ENCODE measurements at regions of chr3 and their contacts with region 1.

Region 1: GRCh38 chr3:171066206-171066605 is 39.7 kb upstream of the SLC2A2 start:
- DNase-seq: no peak
- CTCF ChIP-seq: no peak

Region 2: DNA sequence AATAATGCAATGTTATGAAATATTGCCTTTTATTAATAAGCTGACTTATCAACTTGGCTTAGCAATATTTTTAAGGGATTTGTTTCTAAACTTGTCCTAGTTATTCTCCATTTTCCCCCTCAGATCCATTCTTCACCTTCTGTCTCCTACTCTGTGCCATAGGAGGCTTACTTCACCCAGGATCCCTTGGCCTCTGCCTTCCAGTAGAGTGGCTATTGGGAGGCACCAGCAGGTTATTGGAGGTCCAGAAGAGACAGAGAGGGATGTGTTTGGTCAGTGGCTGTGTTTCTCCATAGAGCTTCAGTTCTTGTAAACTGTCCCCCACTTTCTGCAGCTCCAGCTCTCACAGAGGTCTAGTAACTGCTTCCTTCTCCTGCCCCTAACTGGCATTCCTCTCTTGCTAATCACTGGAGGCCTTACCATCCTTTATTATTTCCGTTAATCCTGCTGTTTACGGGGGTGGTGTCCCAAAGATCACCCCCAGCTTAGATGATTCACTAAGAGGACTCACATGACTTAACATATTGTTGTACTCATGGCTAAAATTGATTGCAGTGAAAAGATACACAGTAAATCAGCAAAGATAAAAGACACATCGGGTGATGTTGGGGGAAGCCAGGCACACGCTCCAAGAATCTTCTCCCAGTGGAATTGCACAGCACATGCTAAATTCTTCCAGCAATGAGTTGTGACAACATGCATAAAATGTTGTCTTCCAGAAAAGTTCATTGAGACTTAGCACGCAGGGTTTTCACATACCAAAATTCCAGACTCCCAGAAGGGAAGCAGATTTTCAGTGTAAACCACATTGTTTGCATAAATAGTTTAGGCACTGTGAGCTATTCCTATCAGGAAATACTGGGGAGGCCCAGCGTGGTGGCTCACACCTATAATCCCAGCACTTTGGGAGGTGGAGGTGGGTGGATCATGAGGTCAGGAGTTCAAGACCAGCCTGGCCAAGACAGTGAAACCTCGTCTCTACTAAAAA is 263.7 kb before region 1 on chr3:
- CTCF ChIA-PET with region 1: no interaction called
- POLR2A ChIA-PET with region 1: no interaction called
- DNase-seq: no peak
- CTCF ChIP-seq: no peak

Region 3: DNA sequence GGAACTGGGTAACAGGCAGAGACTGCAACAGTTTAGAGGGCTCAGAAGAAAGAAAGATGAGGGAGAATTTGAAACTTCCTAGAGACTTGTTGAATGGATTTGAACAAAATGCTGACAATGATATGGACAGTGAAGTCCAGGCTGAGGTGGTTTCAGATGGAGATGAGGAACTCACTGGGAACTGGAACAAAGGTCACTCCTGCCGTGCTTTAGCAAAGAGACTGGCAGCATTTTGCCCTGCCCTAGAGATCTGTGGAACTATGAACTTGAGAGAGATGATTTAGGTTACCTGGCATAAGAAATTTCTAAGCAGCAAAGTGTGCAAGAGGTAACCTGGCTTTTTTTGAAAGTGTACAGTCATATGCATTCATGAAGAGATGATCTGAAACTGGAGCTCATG is 169.4 kb before region 1 on chr3:
- CTCF ChIA-PET with region 1: no interaction called
- POLR2A ChIA-PET with region 1: no interaction called
- DNase-seq: no peak
- CTCF ChIP-seq: no peak

Region 4: DNA sequence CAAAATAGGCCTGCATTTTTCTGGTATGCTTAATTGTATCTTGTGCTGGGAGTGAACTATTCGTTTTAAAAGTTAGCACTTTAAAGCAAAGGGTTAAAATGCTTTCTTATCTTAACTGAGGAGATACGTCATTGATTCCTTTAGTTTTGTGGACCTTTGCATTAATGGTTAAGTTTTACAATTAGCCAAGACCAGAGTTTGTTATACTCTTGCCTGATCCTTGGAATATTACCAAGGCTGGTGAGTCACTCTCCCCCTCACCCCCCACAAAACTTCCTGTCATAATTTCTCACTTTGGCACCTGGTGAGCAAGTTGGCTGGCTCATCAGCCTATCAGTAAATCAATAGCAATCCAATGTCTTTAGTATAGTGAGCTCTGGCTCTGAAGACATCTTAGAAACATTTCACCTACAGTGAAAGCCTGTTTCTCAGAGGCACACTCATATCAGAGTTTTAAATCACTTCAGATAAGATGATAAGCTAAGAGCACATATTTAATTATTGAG is 66.4 kb before region 1 on chr3:
- CTCF ChIA-PET with region 1: no interaction called
- POLR2A ChIA-PET with region 1: no interaction called
- DNase-seq: no peak
- CTCF ChIP-seq: no peak

Region 5: GRCh38 chr3:171049861-171050444 is 16.3 kb before region 1 on chr3:
- CTCF ChIA-PET with region 1: interaction called, 12 read pairs
- POLR2A ChIA-PET with region 1: no interaction called
- DNase-seq: peak; percentile 54
- CTCF ChIP-seq: peak; percentile 55